Mammary epithelial cell (primary cell): ENCODE measurements at regions of chr1 and their contacts with region 1.

Region 1: DNA sequence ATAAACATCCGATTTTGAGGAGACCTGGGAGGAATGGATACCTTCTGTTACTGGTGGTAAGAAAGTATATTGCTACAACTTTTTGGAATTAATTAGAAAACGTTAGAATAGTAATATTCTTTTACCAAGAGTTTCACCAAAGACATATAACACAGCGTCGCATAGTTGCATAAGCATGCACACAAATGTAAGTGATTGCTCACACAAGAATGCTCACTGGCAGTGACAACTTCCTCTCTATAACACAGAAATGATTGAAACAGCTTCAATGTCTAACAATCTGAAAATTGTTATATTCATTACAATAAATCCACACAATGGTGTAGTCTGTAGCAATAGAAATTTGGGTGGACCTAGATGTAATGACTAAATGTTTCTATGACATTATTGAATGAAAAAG is 998.6 kb downstream of the TTLL7 start:
- DNase-seq: no peak
- H3K4me3 ChIP-seq: no peak overlapping the region
- H3K27ac ChIP-seq: no peak overlapping the region
- H3K4me1 ChIP-seq: no peaks in the 10 kb centered on the region
- H3K27me3 ChIP-seq: no peaks in the 10 kb centered on the region
- CTCF ChIP-seq: no peak

Region 2: DNA sequence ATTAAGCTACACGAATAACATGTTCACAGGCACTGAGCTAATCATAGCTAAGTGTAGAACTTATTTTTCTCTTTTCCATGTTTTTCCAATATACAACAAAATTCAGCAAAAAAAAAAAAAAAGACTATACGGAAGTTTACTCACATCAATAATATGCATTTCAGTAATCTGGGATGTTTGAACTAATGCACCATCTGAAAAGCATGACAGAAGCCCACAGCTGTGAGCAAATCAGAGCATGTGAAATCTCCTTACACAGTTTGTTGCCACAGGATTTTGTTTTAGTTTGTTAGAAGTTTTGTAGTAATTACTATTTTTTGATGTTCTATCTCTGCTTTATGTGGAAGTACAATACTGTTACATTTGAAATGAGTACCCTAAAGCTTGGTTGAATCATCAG is 53.0 kb before region 1 on chr1:
- CTCF ChIA-PET with region 1: no interaction called
- dilution Hi-C with region 1: no loop called
- in situ Hi-C with region 1: no loop called
- intact Hi-C with region 1: no loop called
- DNase-seq: no peak
- H3K4me3 ChIP-seq: no peak overlapping the region
- H3K27ac ChIP-seq: no peak overlapping the region
- H3K4me1 ChIP-seq: no peaks in the 10 kb centered on the region
- H3K27me3 ChIP-seq: peaks cover 2% of the 10 kb centered on the region
- CTCF ChIP-seq: no peak

Region 3: DNA sequence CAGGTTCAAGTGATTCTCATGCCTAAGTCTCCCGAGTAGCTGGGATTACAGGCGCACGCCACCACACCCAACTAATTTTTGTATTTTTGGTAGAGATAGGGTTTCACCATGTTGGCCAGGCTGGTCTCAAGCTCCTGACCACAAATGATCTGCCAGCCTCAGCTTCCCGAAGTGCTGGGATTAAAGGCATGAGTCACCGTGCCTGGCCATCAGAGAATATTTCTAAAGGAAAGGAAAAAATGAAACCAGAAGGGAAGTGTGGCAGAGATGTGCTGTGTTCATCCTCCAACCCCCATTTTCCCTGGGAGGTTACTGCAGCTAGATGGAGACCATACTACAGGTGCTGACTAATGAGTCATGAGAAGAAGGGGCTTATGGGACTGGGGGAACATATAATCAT is 34.6 kb after region 1 on chr1:
- CTCF ChIA-PET with region 1: no interaction called
- dilution Hi-C with region 1: no loop called
- in situ Hi-C with region 1: no loop called
- intact Hi-C with region 1: loop called (anchors 1 kb)
- DNase-seq: peak; percentile 4
- H3K4me3 ChIP-seq: no peak overlapping the region
- H3K27ac ChIP-seq: no peak overlapping the region
- H3K4me1 ChIP-seq: peaks cover 8% of the 10 kb centered on the region
- H3K27me3 ChIP-seq: no peaks in the 10 kb centered on the region
- CTCF ChIP-seq: no peak